K562 (cell line): ENCODE measurements at regions of chr17 and their contacts with region 1.

Region 1: GRCh38 chr17:50372758-50373556 is at the starts of genes EME1 and MRPL27:
- DNase-seq: peak; percentile 90 to 94 (median 91)
- ATAC-seq: peak; percentile 93
- H3K4me3 ChIP-seq: peak within 1 kb of the TSS; percentile 77
- H3K27ac ChIP-seq: peak within 1 kb of the TSS; percentile 99
- H3K4me1 ChIP-seq: peaks cover 5 to 8% of the 10 kb centered on the region in 2 experiments
- H3K27me3 ChIP-seq: no peaks in the 10 kb centered on the region
- CTCF ChIP-seq: 0 out of 6 replicates have a peak, but pooled peaks of 1 of the 3 experiments have one; percentile 9
- EP300 ChIP-seq: peak; percentile 62
- POLR2A ChIP-seq: peak; percentile 98
- RAD21 ChIP-seq: no peak
- polyA plus RNA-seq, gene EME1: 14.6 to 27.4 TPM
- polyA plus RNA-seq, gene MRPL27: 388 to 401 TPM

Region 2: DNA sequence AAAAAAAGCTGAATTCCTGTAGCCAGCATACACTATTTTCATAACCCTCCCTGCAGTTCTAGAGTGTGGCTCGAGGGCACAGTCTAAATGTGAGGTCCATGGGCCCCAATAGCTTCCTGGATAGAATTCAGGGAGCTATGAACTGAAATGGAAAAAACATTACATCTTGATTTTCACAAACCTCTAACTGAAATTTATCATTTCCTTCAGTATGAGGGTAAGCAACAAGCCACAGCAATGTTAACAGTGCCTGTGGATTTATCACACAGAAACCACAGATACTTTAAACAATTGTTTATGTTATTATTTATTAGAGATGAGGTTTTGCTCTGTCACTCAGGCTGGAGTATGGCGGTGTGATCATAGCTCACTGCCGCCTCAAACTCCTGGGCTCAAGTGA is 80.5 kb before region 1 on chr17:
- CTCF ChIA-PET with region 1: no interaction called
- POLR2A ChIA-PET with region 1: no interaction called
- in situ Hi-C with region 1: no loop called
- intact Hi-C with region 1: no loop called
- DNase-seq: no peak
- ATAC-seq: no peak
- H3K4me3 ChIP-seq: no peak overlapping the region
- H3K27ac ChIP-seq: no peak overlapping the region
- H3K4me1 ChIP-seq: peaks cover 0 to 14% of the 10 kb centered on the region in 2 experiments; a peak in 3 of 5 replicates
- H3K27me3 ChIP-seq: peaks cover 2 to 32% of the 10 kb centered on the region in 2 experiments; a peak in 3 of 5 replicates
- CTCF ChIP-seq: no peak
- EP300 ChIP-seq: no peak
- POLR2A ChIP-seq: no peak
- RAD21 ChIP-seq: no peak

Region 3: GRCh38 chr17:50361561-50362480 is 11.1 kb before region 1 on chr17:
- CTCF ChIA-PET with region 1: no interaction called
- POLR2A ChIA-PET with region 1: interaction called, 22 read pairs
- in situ Hi-C with region 1: no loop called
- intact Hi-C with region 1: no loop called
- DNase-seq: peak; percentile 86 to 95 (median 91)
- ATAC-seq: peak; percentile 89
- H3K4me3 ChIP-seq: no peak overlapping the region
- H3K27ac ChIP-seq: peak overlapping the region; percentile 62
- H3K4me1 ChIP-seq: peaks cover 17 to 33% of the 10 kb centered on the region in 2 experiments
- H3K27me3 ChIP-seq: no peaks in the 10 kb centered on the region
- CTCF ChIP-seq: peak; percentile 83 to 93 (median 89)
- EP300 ChIP-seq: peak; percentile 75; the same call in 1 of the 2 replicates
- POLR2A ChIP-seq: 0 out of 2 replicates have a peak, but pooled peaks have one; percentile 36
- RAD21 ChIP-seq: peak; percentile 70 to 72

Region 4: DNA sequence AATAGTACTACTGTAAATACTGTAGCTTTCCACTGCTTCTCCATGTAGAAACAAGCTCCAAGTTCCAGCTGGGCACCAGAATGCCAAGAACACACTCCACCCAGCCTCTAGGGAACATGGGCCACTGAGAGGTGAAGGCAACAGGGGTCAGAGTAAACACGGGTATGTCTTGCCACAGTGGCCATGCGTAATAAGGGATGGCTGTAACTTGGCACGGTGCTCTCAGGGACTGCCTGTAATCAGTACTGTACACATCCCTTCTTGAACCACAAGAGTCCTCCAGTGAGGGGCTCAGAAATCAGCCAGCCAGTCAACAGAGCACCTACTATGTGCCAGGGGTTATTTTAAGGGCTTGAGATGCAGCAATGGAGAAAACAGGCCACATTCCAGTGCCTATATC is 13.6 kb after region 1 on chr17:
- CTCF ChIA-PET with region 1: no interaction called
- POLR2A ChIA-PET with region 1: interaction called, 10 read pairs
- in situ Hi-C with region 1: no loop called
- intact Hi-C with region 1: no loop called
- DNase-seq: no peak
- ATAC-seq: no peak
- H3K4me3 ChIP-seq: no peak overlapping the region
- H3K27ac ChIP-seq: no peak overlapping the region
- H3K4me1 ChIP-seq: 0 out of 5 replicates have a peak, but pooled peaks cover 0 to 4% of the 10 kb centered on the region in 2 experiments
- H3K27me3 ChIP-seq: no peaks in the 10 kb centered on the region
- CTCF ChIP-seq: no peak
- EP300 ChIP-seq: no peak
- POLR2A ChIP-seq: no peak
- RAD21 ChIP-seq: no peak